RWPE1 (cell line): ENCODE measurements at regions of chr10 and their contacts with region 1.

Region 1: DNA sequence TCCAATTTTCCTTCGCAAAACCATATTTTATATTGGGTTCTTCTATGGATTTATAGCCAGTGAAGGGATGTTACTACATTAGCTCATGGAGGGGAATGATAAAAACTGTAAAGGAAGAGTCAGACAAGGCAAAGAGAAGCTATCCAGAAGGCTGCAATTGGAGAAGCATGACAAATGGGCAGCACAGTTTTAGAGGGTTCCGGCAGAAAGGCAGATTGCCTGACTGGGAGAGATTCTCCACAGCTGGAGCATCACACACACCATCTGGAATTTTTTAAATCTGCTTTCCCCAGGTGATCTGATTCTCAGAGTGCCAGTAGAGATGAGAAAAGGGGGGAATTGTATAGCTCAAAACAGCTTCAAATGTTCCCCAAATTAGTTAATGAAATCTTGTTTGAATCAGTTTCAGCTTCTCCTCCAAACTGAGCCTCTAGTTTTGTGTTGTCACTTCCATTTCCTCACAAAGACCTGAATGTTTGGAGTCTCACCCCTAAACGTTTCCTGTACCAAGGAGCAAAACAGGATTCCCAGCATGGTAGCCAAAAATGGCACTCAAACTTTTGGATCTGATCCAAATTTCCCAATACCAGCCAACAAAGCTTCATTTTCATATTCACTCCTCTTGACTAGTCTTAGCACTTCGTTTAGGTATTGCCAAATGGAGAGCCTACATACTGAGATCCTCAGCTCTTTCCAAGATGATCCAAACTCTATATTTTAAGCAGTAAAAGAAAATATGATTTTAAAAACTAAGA is 177.5 kb downstream of the HPSE2 start:
- DNase-seq: no peak
- H3K27ac ChIP-seq: no peak overlapping the region
- CTCF ChIP-seq: no peak

Region 2: GRCh38 chr10:98910048-98910447 is 148.1 kb before region 1 on chr10:
- CTCF ChIA-PET with region 1: no interaction called
- POLR2A ChIA-PET with region 1: interaction called, 10 read pairs
- DNase-seq: no peak
- H3K27ac ChIP-seq: no peak overlapping the region
- CTCF ChIP-seq: no peak

Region 3: DNA sequence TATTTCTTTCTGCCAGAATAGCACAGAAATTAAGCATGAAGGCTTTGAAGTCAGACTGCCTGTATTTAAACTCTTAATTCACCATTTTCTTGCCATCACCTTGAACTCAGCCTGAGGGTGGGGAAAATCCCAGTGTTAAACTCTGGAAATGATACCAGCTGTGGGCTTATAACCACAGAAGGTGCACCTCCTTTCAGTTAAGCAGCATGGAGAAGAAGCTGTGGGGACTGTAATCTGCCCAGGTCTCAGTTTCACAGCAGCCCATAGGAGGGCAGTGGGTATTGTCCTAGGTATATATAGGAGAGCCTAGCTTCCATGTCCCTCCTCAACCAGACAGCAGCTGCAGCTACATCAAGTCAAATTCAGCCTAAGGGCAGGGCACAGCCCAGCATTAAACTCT is 64.1 kb before region 1 on chr10:
- CTCF ChIA-PET with region 1: no interaction called
- POLR2A ChIA-PET with region 1: no interaction called
- DNase-seq: no peak
- H3K27ac ChIP-seq: no peak overlapping the region
- CTCF ChIP-seq: no peak

Region 4: DNA sequence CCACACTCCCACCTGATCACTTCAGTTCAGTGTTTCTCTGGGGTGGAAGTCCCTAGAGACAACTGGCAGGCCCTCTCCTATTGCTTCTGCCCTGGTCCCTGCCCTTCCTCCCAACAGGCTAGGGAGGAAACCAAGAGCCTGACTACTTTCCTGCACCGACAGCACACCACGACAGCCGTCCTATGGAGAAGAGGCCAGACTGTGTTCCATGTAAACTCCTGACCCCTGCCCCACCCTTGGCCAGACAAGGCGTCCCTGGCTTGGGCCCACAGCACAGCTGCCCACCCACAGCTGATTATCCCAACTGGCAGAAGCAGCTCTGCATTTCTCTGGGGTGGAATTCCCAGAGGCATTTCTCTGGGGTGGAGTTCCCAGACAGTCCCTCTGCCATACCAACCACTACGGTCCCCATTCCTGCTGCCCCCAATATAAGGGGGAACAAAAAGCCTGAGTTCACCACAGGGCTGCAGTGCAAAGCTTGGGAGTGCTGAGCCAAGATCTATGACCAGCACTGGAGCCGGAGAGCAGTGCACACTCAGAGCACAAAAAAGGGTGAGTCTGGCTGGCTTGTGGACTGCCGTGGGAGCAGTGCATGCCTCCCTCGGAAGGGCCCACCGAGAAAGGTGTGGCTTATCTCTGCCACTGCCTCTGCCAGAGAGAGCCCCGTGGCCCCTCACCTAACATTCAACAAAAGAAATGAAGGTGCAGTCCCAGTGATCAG is 15.9 kb before region 1 on chr10:
- CTCF ChIA-PET with region 1: no interaction called
- POLR2A ChIA-PET with region 1: no interaction called
- DNase-seq: no peak
- H3K27ac ChIP-seq: no peak overlapping the region
- CTCF ChIP-seq: no peak

Region 5: GRCh38 chr10:99084161-99084560 is 26.0 kb after region 1 on chr10:
- CTCF ChIA-PET with region 1: no interaction called
- POLR2A ChIA-PET with region 1: no interaction called
- DNase-seq: no peak
- H3K27ac ChIP-seq: no peak overlapping the region
- CTCF ChIP-seq: no peak